CD4-positive, alpha-beta T cell (primary cell): ENCODE measurements at regions of chr9 and their contacts with region 1.

Region 1: GRCh38 chr9:135961277-135961705 is at the start of gene UBAC1:
- DNase-seq: peak; percentile 89 to 98 (median 94)
- ATAC-seq: peak; percentile 91
- H3K4me3 ChIP-seq: peak within 1 kb of the TSS; percentile 84
- H3K4me3 Mint-ChIP-seq: peak within 1 kb of the TSS; percentile 92
- H3K27ac ChIP-seq: peak within 1 kb of the TSS in 1 of 2 donors; percentile 35
- H3K27ac Mint-ChIP-seq: peak within 1 kb of the TSS; percentile 86
- H3K4me1 ChIP-seq: peaks cover 30% of the 10 kb centered on the region
- H3K4me1 Mint-ChIP-seq: peaks cover 27% of the 10 kb centered on the region
- H3K27me3 ChIP-seq: peaks cover 0 to 2% of the 10 kb centered on the region in 2 experiments
- H3K27me3 Mint-ChIP-seq: no peaks in the 10 kb centered on the region
- CTCF ChIP-seq: peak; percentile 20
- total RNA-seq, gene UBAC1: 16.4 to 19.6 TPM

Region 2: DNA sequence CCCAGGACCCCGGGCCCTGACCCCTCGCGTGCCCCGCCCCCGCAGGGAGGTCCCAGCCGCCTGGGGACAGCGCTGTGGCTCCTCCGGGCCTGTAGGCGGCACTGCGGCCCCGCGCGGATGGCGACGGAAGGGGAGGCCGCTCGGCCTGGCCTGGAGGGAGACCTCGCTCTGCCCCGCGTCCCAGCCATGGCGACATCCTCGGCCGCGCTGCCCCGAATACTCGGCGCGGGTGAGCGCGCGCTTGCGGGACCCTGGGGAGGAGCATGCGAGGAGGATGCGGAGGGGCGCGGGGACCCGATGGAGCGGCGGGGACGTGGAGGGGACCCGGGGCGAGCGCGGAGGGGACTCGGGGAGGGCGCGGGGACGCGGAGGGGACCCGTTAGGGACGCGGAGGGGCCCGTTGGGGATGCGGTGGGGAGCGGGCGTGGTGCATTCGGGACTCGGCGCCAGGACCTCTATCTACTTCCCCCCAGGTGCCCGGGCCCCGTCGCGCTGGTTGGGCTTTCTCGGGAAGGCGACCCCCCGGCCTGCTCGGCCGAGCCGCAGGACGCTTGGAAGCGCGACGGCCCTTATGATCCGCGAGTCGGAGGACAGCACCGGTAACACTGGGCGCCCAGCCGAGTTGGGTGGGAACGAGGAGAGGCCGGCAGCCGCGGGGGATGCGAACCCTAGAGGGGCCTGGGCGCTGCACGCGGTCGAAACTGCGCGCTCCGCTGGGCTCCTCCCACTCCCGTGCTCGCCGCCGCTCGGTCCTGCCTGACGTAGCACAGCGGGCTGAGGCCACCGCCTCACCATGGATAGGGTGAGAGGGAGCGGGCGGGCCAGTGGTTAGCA is 460.5 kb before region 1 on chr9 and contains the start of gene MRPS2:
- CTCF ChIA-PET with region 1: no interaction called
- POLR2A ChIA-PET with region 1: no interaction called
- intact Hi-C with region 1: loop called in 1 of 2 experiments (anchors 5 kb)
- DNase-seq: peak; percentile 65 to 91 (median 82)
- ATAC-seq: peak; percentile 91
- H3K4me3 ChIP-seq: peak within 1 kb of the TSS; percentile 97
- H3K4me3 Mint-ChIP-seq: peak within 1 kb of the TSS; percentile 97
- H3K27ac ChIP-seq: peak within 1 kb of the TSS in 1 of 2 donors; percentile 41
- H3K27ac Mint-ChIP-seq: peak within 1 kb of the TSS; percentile 76
- H3K4me1 ChIP-seq: peaks cover 46% of the 10 kb centered on the region
- H3K4me1 Mint-ChIP-seq: peaks cover 24% of the 10 kb centered on the region
- H3K27me3 ChIP-seq: no peaks in the 10 kb centered on the region
- H3K27me3 Mint-ChIP-seq: no peaks in the 10 kb centered on the region
- CTCF ChIP-seq: peak; percentile 83
- total RNA-seq, gene MRPS2: 20.8 to 23.2 TPM

Region 3: GRCh38 chr9:135864447-135865049 is 96.7 kb before region 1 on chr9:
- CTCF ChIA-PET with region 1: interaction called, 3 read pairs
- POLR2A ChIA-PET with region 1: interaction called, 3 read pairs
- intact Hi-C with region 1: loop called in 1 of 2 experiments (anchors 2 kb)
- DNase-seq: peak; percentile 59 to 82 (median 70)
- ATAC-seq: peak; percentile 74
- H3K4me3 ChIP-seq: no peak overlapping the region
- H3K4me3 Mint-ChIP-seq: no peak overlapping the region
- H3K27ac ChIP-seq: no peak overlapping the region
- H3K27ac Mint-ChIP-seq: no peak overlapping the region
- H3K4me1 ChIP-seq: peaks cover 7% of the 10 kb centered on the region
- H3K4me1 Mint-ChIP-seq: peaks cover 13% of the 10 kb centered on the region
- H3K27me3 ChIP-seq: no peaks in the 10 kb centered on the region
- H3K27me3 Mint-ChIP-seq: no peaks in the 10 kb centered on the region
- CTCF ChIP-seq: peak; percentile 83

Region 4: DNA sequence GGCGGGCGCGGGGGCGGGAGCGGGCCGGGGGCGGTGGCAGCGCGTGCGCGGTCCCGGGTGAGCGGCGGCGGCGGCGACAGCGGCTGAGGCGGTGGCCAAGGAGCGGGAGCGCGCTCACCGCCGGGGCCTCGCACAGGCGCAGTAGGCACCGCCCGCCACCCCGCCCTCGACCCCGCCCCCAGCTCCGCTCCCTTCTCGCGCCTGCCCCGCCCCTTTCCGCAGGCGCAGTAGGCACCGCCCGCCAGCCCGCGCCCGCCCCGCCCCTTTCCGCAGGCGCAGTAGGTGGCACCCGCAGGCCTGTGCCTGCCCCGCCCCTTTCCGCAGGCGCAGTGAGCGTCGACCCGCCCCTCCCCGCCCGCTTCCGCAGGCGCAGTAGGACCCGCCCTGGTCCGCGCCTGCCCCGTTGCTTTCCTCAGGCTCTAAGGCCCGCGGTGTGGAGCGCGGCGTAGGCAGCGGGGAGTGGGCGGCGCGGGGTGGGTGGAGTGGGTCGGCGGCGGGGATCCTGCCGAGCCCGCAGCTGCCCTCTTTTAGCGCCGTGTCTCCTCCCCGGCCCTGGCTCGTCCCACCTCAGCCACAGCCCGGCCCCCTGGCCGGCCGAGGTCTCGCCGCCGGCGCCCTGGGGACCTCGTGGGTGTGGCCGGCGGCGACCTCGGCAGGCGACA is 53.7 kb before region 1 on chr9 and contains the start of gene CAMSAP1:
- CTCF ChIA-PET with region 1: no interaction called
- POLR2A ChIA-PET with region 1: interaction called, 7 read pairs
- intact Hi-C with region 1: loop called (anchors 1 to 5 kb)
- DNase-seq: peak; percentile 89 to 99 (median 96)
- ATAC-seq: peak; percentile 88
- H3K4me3 ChIP-seq: peak within 1 kb of the TSS; percentile 79
- H3K4me3 Mint-ChIP-seq: peak within 1 kb of the TSS; percentile 94
- H3K27ac ChIP-seq: peak within 1 kb of the TSS in 1 of 2 donors; percentile 61
- H3K27ac Mint-ChIP-seq: peak within 1 kb of the TSS; percentile 78
- H3K4me1 ChIP-seq: peaks cover 46% of the 10 kb centered on the region
- H3K4me1 Mint-ChIP-seq: peaks cover 57% of the 10 kb centered on the region
- H3K27me3 ChIP-seq: no peaks in the 10 kb centered on the region
- H3K27me3 Mint-ChIP-seq: no peaks in the 10 kb centered on the region
- CTCF ChIP-seq: no peak
- total RNA-seq, gene CAMSAP1: 16.8 to 18.2 TPM

Region 5: DNA sequence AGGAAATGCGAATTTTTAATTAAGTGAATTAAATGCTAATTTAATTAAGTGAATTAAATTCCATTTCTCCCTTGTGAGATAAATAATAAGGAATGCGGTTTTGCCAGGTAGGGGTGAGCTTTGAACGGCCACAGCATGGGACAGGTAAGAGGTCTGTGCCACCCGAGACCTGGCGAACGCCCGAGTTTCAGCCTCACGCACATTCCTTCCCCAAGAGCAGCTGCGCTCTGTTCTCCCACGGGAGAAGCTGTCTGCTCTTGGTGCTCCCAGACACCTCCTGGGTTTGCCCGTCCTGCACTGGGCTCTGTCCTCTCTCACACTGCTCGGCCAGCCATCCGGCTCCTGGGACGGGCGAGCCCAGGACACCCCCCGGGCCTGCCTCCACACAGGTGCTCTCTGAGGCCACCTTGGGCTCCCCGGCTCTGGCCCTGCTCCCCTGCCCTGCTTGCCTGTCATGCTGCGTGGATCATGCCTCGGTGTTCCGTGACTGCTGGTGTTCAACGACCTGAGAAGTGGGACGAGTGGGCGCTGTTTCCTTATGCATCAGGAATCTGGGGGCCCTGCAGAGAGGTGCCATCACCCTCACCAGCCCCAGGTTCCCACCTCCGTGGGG is 40.2 kb before region 1 on chr9:
- CTCF ChIA-PET with region 1: no interaction called
- POLR2A ChIA-PET with region 1: no interaction called
- intact Hi-C with region 1: no loop called
- DNase-seq: no peak
- ATAC-seq: no peak
- H3K4me3 ChIP-seq: no peak overlapping the region
- H3K4me3 Mint-ChIP-seq: no peak overlapping the region
- H3K27ac ChIP-seq: no peak overlapping the region
- H3K27ac Mint-ChIP-seq: no peak overlapping the region
- H3K4me1 ChIP-seq: peaks cover 6% of the 10 kb centered on the region
- H3K4me1 Mint-ChIP-seq: no peaks in the 10 kb centered on the region
- H3K27me3 ChIP-seq: no peaks in the 10 kb centered on the region
- H3K27me3 Mint-ChIP-seq: no peaks in the 10 kb centered on the region
- CTCF ChIP-seq: no peak

Region 6: GRCh38 chr9:135990468-135991429 is 29.5 kb after region 1 on chr9:
- CTCF ChIA-PET with region 1: no interaction called
- POLR2A ChIA-PET with region 1: no interaction called
- intact Hi-C with region 1: no loop called
- DNase-seq: peak; percentile 43 to 90 (median 50)
- ATAC-seq: peak; percentile 70
- H3K4me3 ChIP-seq: peak overlapping the region; percentile 42
- H3K4me3 Mint-ChIP-seq: peak overlapping the region; percentile 42
- H3K27ac ChIP-seq: no peak overlapping the region
- H3K27ac Mint-ChIP-seq: peak overlapping the region; percentile 61
- H3K4me1 ChIP-seq: peaks cover 48% of the 10 kb centered on the region
- H3K4me1 Mint-ChIP-seq: peaks cover 23% of the 10 kb centered on the region
- H3K27me3 ChIP-seq: no peaks in the 10 kb centered on the region
- H3K27me3 Mint-ChIP-seq: no peaks in the 10 kb centered on the region
- CTCF ChIP-seq: no peak

Region 7: DNA sequence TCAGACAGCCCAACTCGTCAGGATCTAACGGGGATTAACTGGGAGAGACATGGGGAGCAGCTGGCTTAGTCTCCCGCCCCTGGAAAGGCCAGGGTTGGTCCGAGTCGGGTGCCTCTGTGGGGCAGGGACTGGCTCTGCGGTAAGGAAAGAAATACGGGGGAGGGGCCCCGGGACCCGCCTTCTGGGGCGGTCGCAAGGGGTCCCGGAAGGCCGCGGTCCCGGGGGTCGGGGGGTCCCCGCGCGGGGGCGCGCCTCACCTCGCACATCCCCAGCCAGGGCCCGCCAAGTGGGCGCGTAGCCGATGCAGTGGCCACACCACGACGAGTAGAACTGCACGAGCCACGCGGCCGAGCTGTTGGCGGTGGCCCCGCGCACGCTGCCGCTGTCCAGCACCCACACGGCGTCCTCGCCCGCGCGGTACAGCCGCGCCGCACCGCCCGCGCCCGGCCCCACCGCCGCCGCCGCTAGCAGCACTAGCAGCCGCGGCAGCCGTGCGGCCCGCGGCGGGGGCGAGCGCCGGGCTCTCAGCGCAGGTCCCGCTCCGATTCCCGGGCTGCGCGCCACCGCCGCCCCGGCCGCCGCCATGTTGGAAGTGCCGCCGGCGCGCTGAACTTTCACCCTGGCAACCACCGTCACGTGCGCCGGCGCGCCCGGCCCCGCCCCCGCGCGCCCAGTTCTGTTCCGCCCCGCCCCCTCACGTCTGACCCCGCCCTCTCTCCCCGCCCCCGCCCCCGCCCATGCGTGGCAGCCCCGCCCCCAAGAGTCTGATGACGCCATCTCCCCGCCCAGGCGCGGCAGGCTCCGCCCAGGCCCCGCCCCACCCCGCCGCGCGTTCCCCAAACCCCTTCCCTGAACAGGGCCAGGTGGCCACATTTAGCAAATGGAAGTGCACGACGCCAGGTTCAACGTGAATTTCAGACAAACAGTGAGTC is 284.2 kb after region 1 on chr9 and contains the start of gene QSOX2:
- CTCF ChIA-PET with region 1: no interaction called
- POLR2A ChIA-PET with region 1: no interaction called
- intact Hi-C with region 1: loop called (anchors 5 to 10 kb)
- DNase-seq: peak; percentile 73 to 94 (median 84)
- ATAC-seq: peak; percentile 81
- H3K4me3 ChIP-seq: peak within 1 kb of the TSS; percentile 63
- H3K4me3 Mint-ChIP-seq: peak within 1 kb of the TSS; percentile 94
- H3K27ac ChIP-seq: peak within 1 kb of the TSS; percentile 15 to 20
- H3K27ac Mint-ChIP-seq: peak within 1 kb of the TSS; percentile 76
- H3K4me1 ChIP-seq: peaks cover 39% of the 10 kb centered on the region
- H3K4me1 Mint-ChIP-seq: peaks cover 41% of the 10 kb centered on the region
- H3K27me3 ChIP-seq: no peaks in the 10 kb centered on the region
- H3K27me3 Mint-ChIP-seq: no peaks in the 10 kb centered on the region
- CTCF ChIP-seq: no peak
- total RNA-seq, gene QSOX2: 14.4 TPM

Region 8: DNA sequence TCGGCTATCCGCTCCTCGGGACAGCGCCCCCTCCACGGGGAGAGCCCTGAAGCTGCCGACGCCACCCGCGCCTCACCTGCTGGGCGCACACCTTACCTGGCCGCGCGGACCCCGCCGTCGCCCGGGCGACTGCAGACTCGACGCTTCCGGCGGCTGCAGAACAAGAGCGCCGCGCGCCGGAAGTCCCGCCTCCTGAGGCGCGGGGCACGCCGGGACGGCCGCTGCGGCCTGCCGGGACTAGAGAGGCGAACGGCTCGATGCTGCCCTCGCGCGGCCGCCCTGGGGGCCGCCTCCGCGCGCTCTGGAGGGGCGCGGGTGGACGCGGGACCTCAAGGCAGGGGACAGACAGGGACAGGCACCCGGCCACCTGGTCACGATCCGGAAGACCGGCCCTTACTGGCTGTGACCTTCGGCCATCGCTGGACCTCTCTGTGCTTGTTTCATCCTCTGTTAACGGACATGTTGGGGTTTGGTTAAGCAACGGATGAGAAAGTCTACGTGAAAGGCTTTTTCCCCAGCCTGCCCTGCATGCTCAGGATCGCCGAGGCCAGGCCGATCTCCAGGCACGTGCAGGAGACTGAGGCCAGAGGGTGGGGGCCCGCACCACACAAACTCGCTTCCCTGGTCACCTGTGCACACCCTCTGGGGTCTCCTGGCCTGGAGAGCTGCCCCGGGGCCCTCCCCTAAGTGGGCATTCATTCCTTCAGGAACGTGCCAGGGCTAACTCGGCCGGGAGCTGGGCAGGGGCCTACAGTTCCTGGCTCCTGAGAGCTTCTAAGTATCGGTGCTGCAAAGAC is 438.9 kb after region 1 on chr9 and contains the start of gene SNAPC4:
- CTCF ChIA-PET with region 1: no interaction called
- POLR2A ChIA-PET with region 1: no interaction called
- intact Hi-C with region 1: loop called in 1 of 2 experiments (anchors 10 kb)
- DNase-seq: peak; percentile 75 to 95 (median 86)
- ATAC-seq: peak; percentile 66
- H3K4me3 ChIP-seq: peak within 1 kb of the TSS; percentile 72
- H3K4me3 Mint-ChIP-seq: peak within 1 kb of the TSS; percentile 88
- H3K27ac ChIP-seq: no peak within 1 kb of the TSS
- H3K27ac Mint-ChIP-seq: peak within 1 kb of the TSS; percentile 55
- H3K4me1 ChIP-seq: peaks cover 59% of the 10 kb centered on the region
- H3K4me1 Mint-ChIP-seq: peaks cover 41% of the 10 kb centered on the region
- H3K27me3 ChIP-seq: no peaks in the 10 kb centered on the region
- H3K27me3 Mint-ChIP-seq: no peaks in the 10 kb centered on the region
- CTCF ChIP-seq: peak; percentile 87
- total RNA-seq, gene SNAPC4: 7.7 to 8.0 TPM

Region 9: DNA sequence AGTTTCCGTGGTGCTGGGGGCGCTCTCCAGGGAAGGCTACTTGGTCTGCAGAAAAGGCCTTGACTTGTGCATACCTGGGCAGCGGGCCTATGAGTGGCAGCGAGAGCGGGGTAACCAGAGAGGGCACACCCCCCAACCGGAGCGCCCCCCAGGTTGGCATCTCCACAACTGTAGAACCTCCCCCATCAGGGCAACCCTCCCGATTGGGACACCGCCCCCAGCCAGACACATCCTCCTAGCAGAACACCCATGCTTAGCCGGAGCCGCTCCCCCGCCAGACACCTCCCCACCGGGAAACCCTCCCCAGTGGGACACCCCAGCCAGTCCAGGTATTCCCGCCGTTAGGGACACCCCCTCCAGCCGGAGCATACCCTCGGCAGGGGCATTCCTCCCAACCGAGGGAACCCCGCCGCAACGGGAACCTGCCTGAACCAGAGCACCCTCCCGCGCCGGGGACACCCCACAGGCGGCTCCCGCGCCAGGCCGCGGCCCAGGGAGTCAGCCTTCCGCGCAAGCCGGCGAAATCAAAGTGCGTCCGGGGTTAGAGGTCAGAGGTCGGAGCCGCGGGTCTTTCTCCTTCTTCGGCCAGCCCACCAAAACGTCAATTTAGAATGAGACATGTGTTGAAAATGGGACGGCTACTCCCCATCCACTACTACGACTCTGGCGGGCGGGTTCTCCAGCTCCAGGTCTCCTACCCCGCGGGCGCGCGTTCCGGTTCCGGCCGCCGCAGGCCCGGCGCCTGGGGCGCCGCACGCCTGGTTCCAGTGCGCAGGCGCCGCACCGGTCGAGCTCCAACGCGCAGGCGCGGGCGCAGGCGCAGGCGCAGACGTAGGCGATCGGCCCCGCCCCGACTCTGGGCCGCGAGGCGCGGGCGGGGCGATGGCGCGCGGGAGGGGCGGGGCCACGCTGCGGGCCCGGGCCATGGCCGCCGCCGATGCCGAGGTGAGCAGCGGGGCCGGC is 1657.1 kb after region 1 on chr9 and contains the start of gene EHMT1:
- CTCF ChIA-PET with region 1: no interaction called
- POLR2A ChIA-PET with region 1: no interaction called
- intact Hi-C with region 1: loop called in 1 of 2 experiments (anchors 10 kb)
- DNase-seq: peak; percentile 75 to 97 (median 90)
- ATAC-seq: peak; percentile 82
- H3K4me3 ChIP-seq: peak within 1 kb of the TSS; percentile 95
- H3K4me3 Mint-ChIP-seq: peak within 1 kb of the TSS; percentile 95
- H3K27ac ChIP-seq: peak within 1 kb of the TSS; percentile 90 to 96
- H3K27ac Mint-ChIP-seq: peak within 1 kb of the TSS; percentile 93
- H3K4me1 ChIP-seq: peaks cover 37% of the 10 kb centered on the region
- H3K4me1 Mint-ChIP-seq: peaks cover 42% of the 10 kb centered on the region
- H3K27me3 ChIP-seq: no peaks in the 10 kb centered on the region
- H3K27me3 Mint-ChIP-seq: no peaks in the 10 kb centered on the region
- CTCF ChIP-seq: no peak
- total RNA-seq, gene EHMT1: 80.6 to 87.8 TPM